CD8-positive, alpha-beta T cell (primary cell): ENCODE measurements at regions of chr5 and their contacts with region 1.

Region 1: DNA sequence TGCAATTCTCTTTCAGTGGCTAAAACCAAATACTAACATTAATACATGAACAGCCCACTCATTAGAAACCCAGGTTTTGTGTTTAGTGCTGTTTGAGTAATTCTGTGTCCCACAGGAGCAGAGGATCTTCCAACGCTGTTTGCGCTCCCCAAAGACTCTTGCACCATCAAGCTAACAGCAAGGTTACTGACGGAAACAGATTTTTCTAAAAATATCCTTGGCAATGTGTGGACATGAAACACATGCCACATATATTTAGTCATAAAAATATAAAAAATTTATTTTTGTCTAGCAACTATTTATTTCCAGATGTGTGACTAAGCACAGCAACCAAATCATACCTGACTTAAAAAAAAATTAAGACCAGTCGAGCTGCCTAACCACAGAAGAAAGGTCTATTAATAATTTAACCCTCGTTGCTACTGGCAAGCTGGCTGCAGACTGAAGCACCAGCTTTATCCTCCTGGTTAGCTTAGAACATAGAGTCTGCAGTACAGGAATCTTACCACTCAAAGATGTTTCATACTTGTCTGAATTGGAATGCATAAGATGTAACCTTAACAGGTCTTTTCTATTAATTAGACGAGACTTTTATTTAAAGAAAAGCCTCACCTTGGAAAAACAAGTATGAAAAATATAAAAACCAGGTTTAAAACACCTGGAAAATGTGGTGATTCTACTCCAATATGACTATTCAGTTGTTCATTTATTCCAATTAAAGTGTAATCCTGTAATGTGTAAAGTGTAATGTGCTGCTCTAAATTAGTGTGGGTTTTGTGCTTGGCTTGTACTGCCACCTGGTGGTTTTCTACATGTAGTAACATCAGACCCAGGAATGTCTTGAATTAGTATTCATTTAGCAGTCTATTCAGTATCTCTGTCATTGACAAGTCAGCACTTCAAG is 272.5 kb downstream of the EPB41L4A start:
- DNase-seq: peak; percentile 17 to 78 (median 58)
- ATAC-seq: peak; percentile 95
- H3K4me3 ChIP-seq: no peak overlapping the region
- H3K4me3 Mint-ChIP-seq: no peak overlapping the region
- H3K27ac ChIP-seq: no peak overlapping the region
- H3K27ac Mint-ChIP-seq: no peak overlapping the region
- H3K4me1 ChIP-seq: no peaks in the 10 kb centered on the region
- H3K4me1 Mint-ChIP-seq: no peaks in the 10 kb centered on the region
- H3K27me3 ChIP-seq: no peaks in the 10 kb centered on the region
- H3K27me3 Mint-ChIP-seq: peaks cover 16% of the 10 kb centered on the region
- CTCF ChIP-seq: peak; percentile 85

Region 2: GRCh38 chr5:110757118-110757729 is 1389.4 kb before region 1 on chr5:
- CTCF ChIA-PET with region 1: no interaction called
- POLR2A ChIA-PET with region 1: no interaction called
- intact Hi-C with region 1: loop called in 1 of 2 experiments (anchors 2 kb)
- DNase-seq: peak in 3 of 9 experiments; percentile 24 to 59 (median 51)
- ATAC-seq: peak; percentile 37
- H3K4me3 ChIP-seq: no peak overlapping the region
- H3K4me3 Mint-ChIP-seq: no peak overlapping the region
- H3K27ac ChIP-seq: no peak overlapping the region
- H3K27ac Mint-ChIP-seq: no peak overlapping the region
- H3K4me1 ChIP-seq: no peaks in the 10 kb centered on the region
- H3K4me1 Mint-ChIP-seq: peaks cover 17% of the 10 kb centered on the region
- H3K27me3 ChIP-seq: no peaks in the 10 kb centered on the region
- H3K27me3 Mint-ChIP-seq: no peaks in the 10 kb centered on the region
- CTCF ChIP-seq: peak; percentile 73

Region 3: GRCh38 chr5:111158105-111158744 is 988.4 kb before region 1 on chr5:
- CTCF ChIA-PET with region 1: interaction called, 4 read pairs
- POLR2A ChIA-PET with region 1: no interaction called
- intact Hi-C with region 1: loop called (anchors 1 to 5 kb)
- DNase-seq: peak; percentile 59 to 87 (median 83)
- ATAC-seq: peak; percentile 99
- H3K4me3 ChIP-seq: no peak overlapping the region
- H3K4me3 Mint-ChIP-seq: no peak overlapping the region
- H3K27ac ChIP-seq: no peak overlapping the region
- H3K27ac Mint-ChIP-seq: no peak overlapping the region
- H3K4me1 ChIP-seq: no peaks in the 10 kb centered on the region
- H3K4me1 Mint-ChIP-seq: peaks cover 3% of the 10 kb centered on the region
- H3K27me3 ChIP-seq: no peaks in the 10 kb centered on the region
- H3K27me3 Mint-ChIP-seq: peaks cover 3% of the 10 kb centered on the region
- CTCF ChIP-seq: peak; percentile 100

Region 4: GRCh38 chr5:111530298-111530740 is 616.3 kb before region 1 on chr5:
- CTCF ChIA-PET with region 1: interaction called, 14 read pairs
- POLR2A ChIA-PET with region 1: no interaction called
- intact Hi-C with region 1: loop called in 1 of 2 experiments (anchors 5 kb)
- DNase-seq: peak; percentile 63 to 96 (median 83)
- ATAC-seq: peak; percentile 99
- H3K4me3 ChIP-seq: no peak overlapping the region
- H3K4me3 Mint-ChIP-seq: peak overlapping the region; percentile 21
- H3K27ac ChIP-seq: peak overlapping the region; percentile 26 to 81
- H3K27ac Mint-ChIP-seq: peak overlapping the region; percentile 83
- H3K4me1 ChIP-seq: peaks cover 7% of the 10 kb centered on the region
- H3K4me1 Mint-ChIP-seq: peaks cover 12% of the 10 kb centered on the region
- H3K27me3 ChIP-seq: no peaks in the 10 kb centered on the region
- H3K27me3 Mint-ChIP-seq: no peaks in the 10 kb centered on the region
- CTCF ChIP-seq: no peak

Region 5: GRCh38 chr5:111685971-111686370 is 460.6 kb before region 1 on chr5:
- CTCF ChIA-PET with region 1: no interaction called
- POLR2A ChIA-PET with region 1: no interaction called
- intact Hi-C with region 1: loop called in 1 of 2 experiments (anchors 1 kb)
- DNase-seq: peak in 2 of 9 experiments; percentile 6 to 29
- ATAC-seq: no peak
- H3K4me3 ChIP-seq: no peak overlapping the region
- H3K4me3 Mint-ChIP-seq: no peak overlapping the region
- H3K27ac ChIP-seq: no peak overlapping the region
- H3K27ac Mint-ChIP-seq: no peak overlapping the region
- H3K4me1 ChIP-seq: no peaks in the 10 kb centered on the region
- H3K4me1 Mint-ChIP-seq: no peaks in the 10 kb centered on the region
- H3K27me3 ChIP-seq: no peaks in the 10 kb centered on the region
- H3K27me3 Mint-ChIP-seq: no peaks in the 10 kb centered on the region
- CTCF ChIP-seq: no peak

Region 6: GRCh38 chr5:112049738-112050137 is 96.8 kb before region 1 on chr5:
- CTCF ChIA-PET with region 1: no interaction called
- POLR2A ChIA-PET with region 1: no interaction called
- intact Hi-C with region 1: no loop called
- DNase-seq: no peak
- ATAC-seq: no peak
- H3K4me3 ChIP-seq: no peak overlapping the region
- H3K4me3 Mint-ChIP-seq: no peak overlapping the region
- H3K27ac ChIP-seq: no peak overlapping the region
- H3K27ac Mint-ChIP-seq: no peak overlapping the region
- H3K4me1 ChIP-seq: no peaks in the 10 kb centered on the region
- H3K4me1 Mint-ChIP-seq: no peaks in the 10 kb centered on the region
- H3K27me3 ChIP-seq: no peaks in the 10 kb centered on the region
- H3K27me3 Mint-ChIP-seq: peaks cover 2% of the 10 kb centered on the region
- CTCF ChIP-seq: no peak